MCF 10A (cell line): ENCODE measurements at regions of chr1 and their contacts with region 1.

Region 1: DNA sequence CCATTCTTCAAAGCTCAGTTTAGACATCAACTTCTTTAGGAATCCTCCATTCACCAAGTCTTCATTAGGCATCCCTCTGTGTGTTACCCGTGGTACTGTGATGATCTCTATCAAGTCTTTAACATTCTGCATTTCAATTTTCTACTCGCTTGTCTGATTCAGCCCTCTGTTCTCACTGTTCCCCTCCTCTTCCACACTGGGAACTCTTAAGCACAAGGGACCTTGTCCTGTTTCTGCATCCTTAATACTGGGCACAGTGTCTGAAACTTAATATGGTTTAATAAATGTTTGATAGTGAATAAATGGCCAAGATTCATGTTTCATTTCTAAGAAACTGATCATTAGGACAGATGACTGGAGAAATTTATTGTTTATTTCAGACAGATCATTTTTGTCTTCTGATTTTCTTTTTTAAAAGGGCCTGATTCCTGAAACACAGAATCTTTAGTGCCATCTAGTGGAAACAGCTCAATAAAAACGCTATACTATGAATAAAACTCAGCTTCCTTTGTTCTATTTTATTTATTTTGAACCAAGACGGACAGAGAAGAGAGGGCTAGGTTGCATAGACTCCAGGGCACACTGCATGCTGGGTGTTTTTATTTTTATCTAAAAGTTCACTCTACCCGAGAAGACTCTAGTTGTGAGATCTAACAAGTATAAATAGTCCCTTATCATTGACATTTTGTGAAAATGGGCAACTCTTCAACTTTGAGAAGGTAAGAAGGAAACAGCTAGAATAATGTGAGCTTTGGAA is 7.0 kb upstream of the TRIM45 start:
- DNase-seq: peak; percentile 52
- H3K4me3 Mint-ChIP-seq: no peak overlapping the region
- H3K27ac Mint-ChIP-seq: no peak overlapping the region
- H3K4me1 Mint-ChIP-seq: peaks cover 11% of the 10 kb centered on the region
- H3K27me3 Mint-ChIP-seq: no peaks in the 10 kb centered on the region
- CTCF ChIP-seq: peak; percentile 42

Region 2: DNA sequence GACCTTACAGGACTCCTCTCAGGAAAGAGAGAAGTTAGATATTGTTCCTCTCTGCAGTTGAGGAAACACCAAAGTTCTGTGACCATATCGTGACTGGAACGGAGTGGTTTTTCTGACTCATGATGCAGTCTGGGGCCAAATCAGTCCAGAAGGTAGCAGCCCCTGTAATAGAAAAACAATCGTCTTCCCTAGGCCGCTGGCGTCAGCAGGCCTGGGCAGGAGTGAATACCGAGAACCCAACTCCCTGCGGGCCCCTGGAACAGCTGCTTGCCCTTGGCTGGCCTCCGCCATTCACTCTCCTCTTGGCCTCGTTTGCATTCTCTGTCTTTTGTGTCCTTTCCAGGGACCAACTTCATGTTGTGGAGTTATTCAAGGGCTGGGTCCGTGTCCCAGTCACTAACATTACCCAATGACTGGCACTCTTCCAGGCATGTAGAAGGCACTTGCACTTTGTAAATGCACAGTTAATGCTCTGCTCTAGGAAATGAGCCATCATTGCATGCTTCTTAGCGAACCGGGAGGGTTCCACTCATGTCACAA is 137.8 kb before region 1 on chr1:
- CTCF ChIA-PET with region 1: no interaction called
- POLR2A ChIA-PET with region 1: no interaction called
- intact Hi-C with region 1: no loop called
- DNase-seq: peak; percentile 98
- H3K4me3 Mint-ChIP-seq: peak overlapping the region; percentile 2
- H3K27ac Mint-ChIP-seq: peak overlapping the region; percentile 89
- H3K4me1 Mint-ChIP-seq: peaks cover 30% of the 10 kb centered on the region
- H3K27me3 Mint-ChIP-seq: no peaks in the 10 kb centered on the region
- CTCF ChIP-seq: no peak

Region 3: GRCh38 chr1:117110774-117111173 is 17.7 kb before region 1 on chr1:
- CTCF ChIA-PET with region 1: interaction called, 17 read pairs
- POLR2A ChIA-PET with region 1: no interaction called
- intact Hi-C with region 1: no loop called
- DNase-seq: peak; percentile 48
- H3K4me3 Mint-ChIP-seq: no peak overlapping the region
- H3K27ac Mint-ChIP-seq: no peak overlapping the region
- H3K4me1 Mint-ChIP-seq: peaks cover 19% of the 10 kb centered on the region
- H3K27me3 Mint-ChIP-seq: no peaks in the 10 kb centered on the region
- CTCF ChIP-seq: no peak

Region 4: GRCh38 chr1:117146570-117147346 is 18.3 kb after region 1 on chr1:
- CTCF ChIA-PET with region 1: interaction called, 18 read pairs
- POLR2A ChIA-PET with region 1: interaction called, 5 read pairs
- intact Hi-C with region 1: no loop called
- DNase-seq: peak; percentile 80
- H3K4me3 Mint-ChIP-seq: no peak overlapping the region
- H3K27ac Mint-ChIP-seq: peak overlapping the region; percentile 63
- H3K4me1 Mint-ChIP-seq: peaks cover 29% of the 10 kb centered on the region
- H3K27me3 Mint-ChIP-seq: no peaks in the 10 kb centered on the region
- CTCF ChIP-seq: no peak